ENCODE measurements at regions of chr1 and their contacts with region 1.

Region 1: DNA sequence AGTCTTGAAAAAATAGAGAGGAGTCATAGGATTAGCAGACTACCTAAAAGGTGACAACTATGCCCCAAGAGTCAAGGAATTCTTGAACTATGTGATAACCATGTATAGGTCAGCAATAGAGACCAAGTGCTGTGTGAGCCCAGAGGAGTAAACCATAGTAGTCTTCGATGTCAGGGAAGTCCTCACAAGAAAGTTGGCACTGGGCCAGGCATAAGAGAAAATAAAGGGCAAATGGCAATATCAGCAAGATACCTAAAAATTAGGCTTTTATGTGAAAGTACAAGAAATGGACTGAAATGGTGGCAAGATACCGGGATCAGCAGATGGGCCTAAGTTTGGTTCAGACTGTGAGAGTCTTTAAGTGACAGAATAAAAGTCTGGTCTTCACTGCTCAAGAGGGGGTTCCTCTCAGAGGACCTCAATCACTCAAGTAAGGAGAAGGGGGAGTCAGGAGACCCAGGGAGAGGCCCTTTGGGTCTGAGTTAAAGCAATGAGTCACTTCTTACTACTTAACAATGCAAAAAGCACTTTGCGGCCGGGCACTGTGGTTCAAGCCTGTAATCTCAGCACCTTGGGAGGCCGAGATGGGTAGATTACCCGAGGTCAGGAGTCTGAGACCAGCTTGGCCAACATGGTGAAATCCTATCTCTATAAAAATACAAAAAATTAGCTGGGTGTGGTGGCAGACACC is 95.0 kb downstream of the TEX35 start:
- DNase-seq: peak; percentile 69
- ATAC-seq: peak; percentile 11
- H3K4me3 ChIP-seq: peak overlapping the region in 1 of 5 experiments; percentile 39
- H3K4me3 Mint-ChIP-seq: peak overlapping the region; percentile 69
- H3K27ac ChIP-seq: peak overlapping the region; percentile 96 to 98
- H3K27ac Mint-ChIP-seq: peak overlapping the region; percentile 99
- H3K4me1 ChIP-seq: peaks cover 83 to 88% of the 10 kb centered on the region in 2 donors
- H3K4me1 Mint-ChIP-seq: peaks cover 78% of the 10 kb centered on the region
- H3K27me3 ChIP-seq: no peaks in the 10 kb centered on the region
- H3K27me3 Mint-ChIP-seq: no peaks in the 10 kb centered on the region
- CTCF ChIP-seq: no peak

Region 2: DNA sequence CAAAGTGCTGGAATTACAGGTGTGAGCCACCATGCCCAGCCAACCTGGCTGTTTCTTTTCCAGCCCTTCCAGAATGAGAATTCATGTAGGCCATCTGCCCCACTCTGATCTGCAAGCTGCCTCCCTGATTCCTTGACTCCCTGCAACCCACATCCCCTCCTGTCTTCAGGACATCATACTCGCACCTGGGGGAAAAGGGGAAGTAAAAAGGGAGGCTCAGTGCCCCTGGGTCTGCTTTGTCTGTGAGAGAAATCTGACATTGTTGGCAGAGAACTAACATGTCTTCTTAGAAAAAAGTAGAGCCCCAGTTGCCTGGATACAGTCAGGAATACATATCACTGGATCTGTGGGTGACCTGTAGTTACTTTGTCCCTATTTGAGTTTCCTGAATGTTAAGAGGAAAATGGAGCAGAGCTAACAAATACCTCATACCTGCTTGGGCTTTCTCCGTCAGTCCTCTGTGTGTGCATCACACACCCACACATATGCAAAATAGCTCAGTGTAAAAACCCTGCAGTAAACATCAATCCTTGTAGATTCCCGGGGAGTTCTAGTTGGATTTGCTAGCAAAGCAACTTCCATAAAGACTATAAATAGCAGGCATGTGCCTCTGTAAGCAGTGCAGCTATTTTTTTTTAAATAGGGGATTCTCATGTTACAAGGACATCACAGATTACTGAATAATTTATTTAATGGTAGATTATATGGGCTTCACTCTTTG is 32.1 kb before region 1 on chr1:
- CTCF ChIA-PET with region 1: interaction called, 53 read pairs
- POLR2A ChIA-PET with region 1: interaction called, 62 read pairs
- intact Hi-C with region 1: no loop called
- DNase-seq: peak; percentile 85
- ATAC-seq: peak; percentile 36
- H3K4me3 ChIP-seq: peak overlapping the region in 3 of 5 experiments; percentile 0 to 39 (median 2)
- H3K4me3 Mint-ChIP-seq: peak overlapping the region; percentile 75
- H3K27ac ChIP-seq: peak overlapping the region; percentile 95 to 97
- H3K27ac Mint-ChIP-seq: peak overlapping the region; percentile 93
- H3K4me1 ChIP-seq: peaks cover 79 to 88% of the 10 kb centered on the region in 2 donors
- H3K4me1 Mint-ChIP-seq: peaks cover 81% of the 10 kb centered on the region
- H3K27me3 ChIP-seq: no peaks in the 10 kb centered on the region
- H3K27me3 Mint-ChIP-seq: no peaks in the 10 kb centered on the region
- CTCF ChIP-seq: no peak

Region 3: GRCh38 chr1:178619042-178619927 is 11.4 kb after region 1 on chr1:
- CTCF ChIA-PET with region 1: interaction called, 13 read pairs
- POLR2A ChIA-PET with region 1: interaction called, 14 read pairs
- intact Hi-C with region 1: loop called (anchors 1 kb)
- DNase-seq: peak; percentile 61
- ATAC-seq: peak; percentile 75
- H3K4me3 ChIP-seq: no peak overlapping the region
- H3K4me3 Mint-ChIP-seq: peak overlapping the region; percentile 24
- H3K27ac ChIP-seq: peak overlapping the region; percentile 60 to 75
- H3K27ac Mint-ChIP-seq: peak overlapping the region; percentile 90
- H3K4me1 ChIP-seq: peaks cover 41 to 46% of the 10 kb centered on the region in 2 donors
- H3K4me1 Mint-ChIP-seq: peaks cover 62% of the 10 kb centered on the region
- H3K27me3 ChIP-seq: no peaks in the 10 kb centered on the region
- H3K27me3 Mint-ChIP-seq: no peaks in the 10 kb centered on the region
- CTCF ChIP-seq: no peak

Region 4: DNA sequence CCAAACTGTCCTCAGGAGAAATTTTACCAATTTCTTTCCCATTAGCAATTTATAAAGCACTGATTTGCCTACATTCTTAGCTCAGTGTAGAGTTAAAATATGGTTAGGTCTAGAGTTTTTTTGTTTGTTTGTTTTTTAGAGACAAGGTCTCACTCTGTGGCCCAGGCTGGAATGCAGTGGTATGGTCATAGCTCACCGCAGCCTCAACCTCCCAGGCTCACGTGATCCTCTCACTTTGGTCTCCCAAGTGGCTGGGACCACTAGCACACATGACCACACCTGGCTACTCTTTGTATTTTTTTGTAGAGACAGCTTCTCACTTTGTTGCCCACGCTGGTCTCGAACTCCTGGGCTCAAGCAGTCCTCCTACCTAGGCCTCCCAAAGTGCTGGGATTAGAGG is 106.6 kb after region 1 on chr1:
- CTCF ChIA-PET with region 1: no interaction called
- POLR2A ChIA-PET with region 1: no interaction called
- intact Hi-C with region 1: no loop called
- DNase-seq: no peak
- ATAC-seq: no peak
- H3K4me3 ChIP-seq: no peak overlapping the region
- H3K4me3 Mint-ChIP-seq: no peak overlapping the region
- H3K27ac ChIP-seq: no peak overlapping the region
- H3K27ac Mint-ChIP-seq: no peak overlapping the region
- H3K4me1 ChIP-seq: peaks cover 8 to 18% of the 10 kb centered on the region in 2 donors
- H3K4me1 Mint-ChIP-seq: peaks cover 43% of the 10 kb centered on the region
- H3K27me3 ChIP-seq: no peaks in the 10 kb centered on the region
- H3K27me3 Mint-ChIP-seq: no peaks in the 10 kb centered on the region
- CTCF ChIP-seq: no peak

Region 5: GRCh38 chr1:178725603-178726517 is 118.0 kb after region 1 on chr1:
- CTCF ChIA-PET with region 1: interaction called, 16 read pairs
- POLR2A ChIA-PET with region 1: interaction called, 31 read pairs
- intact Hi-C with region 1: loop called (anchors 1 kb)
- DNase-seq: peak; percentile 89
- ATAC-seq: peak; percentile 68
- H3K4me3 ChIP-seq: peak overlapping the region; percentile 70 to 99 (median 79)
- H3K4me3 Mint-ChIP-seq: peak overlapping the region; percentile 96
- H3K27ac ChIP-seq: peak overlapping the region; percentile 78 to 90
- H3K27ac Mint-ChIP-seq: peak overlapping the region; percentile 94
- H3K4me1 ChIP-seq: peaks cover 28 to 33% of the 10 kb centered on the region in 2 donors
- H3K4me1 Mint-ChIP-seq: peaks cover 52% of the 10 kb centered on the region
- H3K27me3 ChIP-seq: no peaks in the 10 kb centered on the region
- H3K27me3 Mint-ChIP-seq: no peaks in the 10 kb centered on the region
- CTCF ChIP-seq: no peak

Region 6: DNA sequence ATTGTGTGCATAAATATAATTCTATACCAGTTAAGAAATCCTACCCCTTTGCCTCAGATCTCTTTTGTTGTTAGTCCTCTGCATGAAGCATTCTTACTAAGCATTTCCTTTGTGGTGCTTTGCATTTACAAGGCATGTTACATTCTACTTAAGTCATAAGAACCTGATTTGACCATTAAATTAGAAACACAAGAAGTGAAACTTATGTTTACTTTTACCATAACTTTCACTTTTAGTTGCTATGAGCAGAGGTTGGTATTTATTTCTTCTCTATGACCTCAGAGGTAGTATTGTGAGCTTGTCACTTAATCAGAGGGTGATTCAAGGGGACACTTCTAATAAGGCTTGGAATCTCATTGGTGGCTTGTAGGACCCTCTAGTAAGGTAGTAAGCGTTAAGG is 426.9 kb after region 1 on chr1:
- CTCF ChIA-PET with region 1: no interaction called
- POLR2A ChIA-PET with region 1: no interaction called
- intact Hi-C with region 1: loop called (anchors 1 kb)
- DNase-seq: peak; percentile 70
- ATAC-seq: peak; percentile 84
- H3K4me3 ChIP-seq: peak overlapping the region in 2 of 5 experiments; percentile 2 to 8
- H3K4me3 Mint-ChIP-seq: peak overlapping the region; percentile 83
- H3K27ac ChIP-seq: peak overlapping the region; percentile 58 to 77
- H3K27ac Mint-ChIP-seq: peak overlapping the region; percentile 94
- H3K4me1 ChIP-seq: peaks cover 48 to 51% of the 10 kb centered on the region in 2 donors
- H3K4me1 Mint-ChIP-seq: peaks cover 86% of the 10 kb centered on the region
- H3K27me3 ChIP-seq: no peaks in the 10 kb centered on the region
- H3K27me3 Mint-ChIP-seq: no peaks in the 10 kb centered on the region
- CTCF ChIP-seq: no peak